Transverse colon (tissue), 4 donors: ENCODE measurements at regions of chr20 and their contacts with region 1.

Region 1: GRCh38 chr20:47392015-47392720 is 35.7 kb upstream of the ZMYND8 start:
- DNase-seq: no peak
- H3K4me3 ChIP-seq: no peak overlapping the region
- H3K27ac ChIP-seq: no peak overlapping the region
- H3K4me1 ChIP-seq: no peaks in the 10 kb centered on the region
- H3K27me3 ChIP-seq: no peaks in the 10 kb centered on the region
- CTCF ChIP-seq: no peak
- EP300 ChIP-seq: no peak
- POLR2A ChIP-seq: no peak

Region 2: DNA sequence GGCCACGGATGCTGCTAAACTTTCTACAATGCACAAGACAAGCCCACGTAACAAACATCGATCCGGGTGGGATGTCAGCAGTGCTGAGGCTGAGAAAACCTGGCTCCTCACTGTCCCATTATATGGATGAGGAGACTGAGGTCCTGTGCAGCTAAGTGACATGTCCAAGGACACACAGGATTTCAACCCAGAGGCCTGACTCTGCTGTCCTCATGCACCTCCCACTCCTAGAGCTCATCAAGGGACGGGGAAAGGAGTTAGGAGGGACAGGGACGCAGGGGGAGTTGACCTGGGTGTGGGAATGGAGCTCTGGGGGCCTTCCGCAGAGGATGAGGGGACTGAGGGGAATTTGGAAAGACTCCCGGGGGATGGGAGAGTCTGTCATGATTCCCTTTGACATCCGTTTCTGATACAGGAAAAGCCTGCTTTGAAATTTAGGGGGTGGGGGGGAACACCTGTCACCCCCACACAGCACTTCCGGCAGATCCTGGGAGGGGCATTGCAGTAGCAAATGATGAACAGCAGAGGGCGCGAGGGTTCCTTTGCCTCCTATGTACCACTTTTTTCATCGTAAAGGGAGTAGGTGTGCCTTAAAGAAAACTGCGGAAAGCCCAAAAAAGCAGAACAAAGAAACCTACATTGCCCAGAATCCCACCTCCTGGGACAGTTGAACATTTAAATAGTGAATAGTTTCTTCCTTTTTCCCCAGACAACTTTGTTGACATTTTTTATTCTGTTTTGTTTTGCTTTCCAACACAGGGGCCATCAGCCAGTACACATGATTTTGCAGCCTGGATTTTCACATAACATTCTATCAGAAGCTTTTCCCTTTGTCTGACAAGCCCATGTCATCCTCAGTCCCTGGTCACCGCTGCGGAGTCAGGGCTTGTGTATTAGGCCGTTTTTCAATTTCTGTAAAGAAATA is 634.2 kb before region 1 on chr20:
- in situ Hi-C with region 1: loop called in 2 of 4 experiments (anchors 25 kb)
- intact Hi-C with region 1: no loop called
- DNase-seq: peak; percentile 51
- H3K4me3 ChIP-seq: no peak overlapping the region
- H3K27ac ChIP-seq: no peak overlapping the region
- H3K4me1 ChIP-seq: peaks cover 0 to 4% (median 0%) of the 10 kb centered on the region in 4 donors
- H3K27me3 ChIP-seq: no peaks in the 10 kb centered on the region
- CTCF ChIP-seq: peak; percentile 90 to 96 (median 95)
- EP300 ChIP-seq: no peak
- POLR2A ChIP-seq: no peak

Region 3: DNA sequence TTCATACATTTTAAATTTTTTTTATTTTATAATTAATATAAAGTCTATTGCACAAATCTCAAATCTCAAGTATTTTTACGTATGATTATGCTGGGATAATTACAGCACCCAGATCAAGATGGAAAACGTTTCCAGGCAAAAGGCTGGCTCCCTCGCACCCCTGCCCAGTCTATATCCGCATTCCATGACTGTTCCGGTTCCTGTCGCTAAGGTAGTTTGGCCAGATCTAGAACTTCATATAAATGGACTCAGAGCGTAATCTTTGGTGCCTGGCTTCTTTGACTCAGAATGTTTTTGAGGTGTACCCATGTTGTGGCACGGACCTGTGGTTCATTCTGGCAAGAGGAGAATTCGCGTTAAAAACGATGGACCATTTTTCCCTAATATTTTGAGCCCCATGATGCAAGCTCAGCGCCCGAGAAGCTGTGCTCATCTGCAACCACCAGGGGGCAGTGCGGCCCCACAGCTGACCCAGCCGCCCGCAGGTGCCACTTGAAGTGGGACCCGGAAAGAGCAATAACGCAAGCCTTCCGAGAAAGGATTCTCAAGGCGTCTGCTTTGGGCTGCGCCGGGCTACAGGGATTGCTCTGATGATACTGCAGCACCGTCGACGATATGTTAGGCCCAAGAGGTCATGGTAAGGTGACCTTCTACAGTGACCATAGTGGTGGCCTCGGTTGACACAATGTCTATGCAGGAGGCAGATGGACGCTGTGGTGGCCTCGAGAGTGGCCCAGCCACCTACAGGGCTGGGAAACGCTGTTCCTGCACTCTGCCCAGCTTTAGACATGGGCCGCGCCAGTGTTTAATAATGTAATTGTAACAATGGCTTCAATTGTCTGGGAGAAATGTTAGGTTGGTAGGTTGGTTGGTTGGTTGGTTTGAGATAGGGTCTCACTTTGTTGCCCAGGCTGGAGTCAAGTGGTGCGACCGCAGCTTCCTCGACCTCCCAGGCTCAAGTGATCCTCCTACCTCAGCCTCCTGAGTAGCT is 195.8 kb before region 1 on chr20:
- in situ Hi-C with region 1: loop called in 3 of 4 experiments (anchors 10 to 25 kb)
- intact Hi-C with region 1: no loop called
- DNase-seq: peak; percentile 81
- H3K4me3 ChIP-seq: no peak overlapping the region
- H3K27ac ChIP-seq: no peak overlapping the region
- H3K4me1 ChIP-seq: peaks cover 0 to 6% (median 2%) of the 10 kb centered on the region in 4 donors
- H3K27me3 ChIP-seq: no peaks in the 10 kb centered on the region
- CTCF ChIP-seq: peak; percentile 91 to 99 (median 97)
- EP300 ChIP-seq: no peak
- POLR2A ChIP-seq: no peak

Region 4: DNA sequence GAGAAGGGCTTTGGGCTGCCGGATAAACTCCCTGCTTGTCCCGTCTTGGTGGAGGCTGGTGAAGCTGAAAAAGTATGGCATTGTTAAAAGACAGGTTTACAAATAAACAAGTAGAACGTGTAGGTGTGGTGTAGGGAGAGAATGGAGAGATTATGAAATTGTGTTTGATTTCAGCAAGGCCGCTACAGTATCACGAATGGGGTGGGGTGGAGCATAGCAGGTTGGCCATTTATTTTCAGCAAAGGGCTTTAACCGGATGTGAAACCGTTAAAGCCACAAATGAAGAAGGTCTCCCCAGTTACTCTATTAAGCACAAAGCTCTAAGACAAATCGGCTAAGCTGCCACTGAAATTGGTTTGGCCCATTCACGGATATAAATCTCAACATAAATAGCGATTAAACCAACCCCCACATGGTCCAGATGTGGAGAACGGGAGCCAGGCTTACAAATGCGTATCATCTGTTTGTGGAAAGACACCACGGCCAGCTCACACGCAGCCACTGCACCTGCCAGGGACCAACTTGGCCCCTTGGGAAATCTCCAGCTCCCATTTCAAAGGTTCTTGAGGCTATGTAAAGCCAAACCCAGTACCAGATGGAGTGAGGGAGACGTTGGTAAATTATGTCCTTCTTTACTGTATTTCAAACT is 129.7 kb before region 1 on chr20:
- in situ Hi-C with region 1: loop called in 1 of 4 experiments (anchors 10 kb)
- intact Hi-C with region 1: no loop called
- DNase-seq: no peak
- H3K4me3 ChIP-seq: no peak overlapping the region
- H3K27ac ChIP-seq: peak overlapping the region in 2 of 4 donors; percentile 24 to 63
- H3K4me1 ChIP-seq: no peaks in the 10 kb centered on the region
- H3K27me3 ChIP-seq: no peaks in the 10 kb centered on the region
- CTCF ChIP-seq: no peak
- EP300 ChIP-seq: no peak
- POLR2A ChIP-seq: no peak

Region 5: GRCh38 chr20:47272893-47273590 is 119.1 kb before region 1 on chr20:
- in situ Hi-C with region 1: loop called in 2 of 4 experiments (anchors 10 kb)
- intact Hi-C with region 1: no loop called
- DNase-seq: peak; percentile 31
- H3K4me3 ChIP-seq: no peak overlapping the region
- H3K27ac ChIP-seq: peak overlapping the region; percentile 77 to 82 (median 80)
- H3K4me1 ChIP-seq: peaks cover 15 to 36% (median 16%) of the 10 kb centered on the region in 4 donors
- H3K27me3 ChIP-seq: no peaks in the 10 kb centered on the region
- CTCF ChIP-seq: peak; percentile 82 to 97 (median 84)
- EP300 ChIP-seq: no peak
- POLR2A ChIP-seq: no peak

Region 6: GRCh38 chr20:47620808-47621805 is 228.9 kb after region 1 on chr20:
- in situ Hi-C with region 1: loop called (anchors 10 to 25 kb)
- intact Hi-C with region 1: loop called (anchors 10 kb)
- DNase-seq: no peak
- H3K4me3 ChIP-seq: no peak overlapping the region
- H3K27ac ChIP-seq: no peak overlapping the region
- H3K4me1 ChIP-seq: peaks cover 0 to 4% (median 1%) of the 10 kb centered on the region in 4 donors
- H3K27me3 ChIP-seq: no peaks in the 10 kb centered on the region
- CTCF ChIP-seq: peak; percentile 77 to 91 (median 81)
- EP300 ChIP-seq: no peak
- POLR2A ChIP-seq: no peak